Activated T-helper 1 cell treated with anti-CD3 and anti-CD28 coated beads, Interleukin-12 subunit alpha, Interleukin-12 subunit beta, Interleukin-2, Interleukin-4 antibody, amounts not matched to agents 30 ng/mL and 10 ng/mL and 1 ng/mL, durations not matched to agents 14 hours and 24 hours and 36 hours (primary cell): ENCODE measurements at regions of chr7 and their contacts with region 1.

Region 1: GRCh38 chr7:92682903-92683539 is 92.8 kb upstream of the FAM133B start:
- DNase-seq: no peak
- H3K4me3 Mint-ChIP-seq: peak overlapping the region; percentile 57
- H3K27ac Mint-ChIP-seq: peak overlapping the region; percentile 95
- H3K4me1 Mint-ChIP-seq: peaks cover 90% of the 10 kb centered on the region
- H3K27me3 Mint-ChIP-seq: no peaks in the 10 kb centered on the region

Region 2: DNA sequence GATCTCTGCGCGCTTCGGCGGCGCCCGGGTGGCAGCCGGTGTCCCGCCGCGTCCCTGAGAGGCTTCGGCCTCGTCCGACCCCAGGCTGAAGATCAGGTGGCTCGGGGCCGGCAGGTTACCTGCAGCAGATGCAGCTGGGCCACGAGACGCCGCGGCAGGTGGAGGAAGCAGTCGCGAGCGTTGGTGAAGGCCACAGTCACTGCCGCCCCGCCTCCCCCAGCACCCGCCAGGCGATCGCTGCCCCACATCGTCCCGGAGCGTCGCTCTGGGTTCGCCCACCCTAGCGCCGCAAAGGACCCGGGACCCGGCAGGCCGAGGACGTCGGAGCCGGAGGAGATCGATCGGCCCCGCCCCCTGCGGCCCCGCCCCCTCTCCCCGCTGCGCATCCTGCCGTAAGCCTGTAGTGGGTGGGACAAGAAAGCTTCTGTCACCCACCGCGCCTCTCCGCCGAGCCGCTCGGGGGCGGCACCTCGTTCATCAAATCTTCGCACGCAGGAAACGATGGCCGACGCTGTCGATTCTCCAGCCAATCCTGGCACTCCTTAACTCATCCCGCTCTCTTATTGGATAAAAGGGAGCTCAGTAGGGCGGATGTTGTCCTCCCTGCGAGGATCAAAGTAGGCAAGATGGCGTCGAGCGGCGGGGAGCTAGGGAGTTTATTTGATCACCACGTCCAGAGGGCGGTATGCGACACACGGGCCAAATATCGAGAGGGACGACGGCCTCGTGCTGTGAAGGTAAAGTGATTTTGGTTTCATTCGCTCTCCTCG is 154.6 kb before region 1 on chr7 and contains the starts of genes PEX1 and RBM48:
- intact Hi-C with region 1: loop called (anchors 5 kb)
- DNase-seq: peak; percentile 94
- H3K4me3 Mint-ChIP-seq: peak within 1 kb of the TSS; percentile 91
- H3K27ac Mint-ChIP-seq: peak within 1 kb of the TSS; percentile 94
- H3K4me1 Mint-ChIP-seq: peaks cover 24% of the 10 kb centered on the region
- H3K27me3 Mint-ChIP-seq: no peaks in the 10 kb centered on the region
- total RNA-seq, gene PEX1: 14.7 and 17.0 TPM in 2 replicates
- total RNA-seq, gene RBM48: 17.2 and 17.6 TPM in 2 replicates

Region 3: GRCh38 chr7:92595281-92595680 is 87.7 kb before region 1 on chr7:
- intact Hi-C with region 1: no loop called
- DNase-seq: no peak
- H3K4me3 Mint-ChIP-seq: no peak overlapping the region
- H3K27ac Mint-ChIP-seq: no peak overlapping the region
- H3K4me1 Mint-ChIP-seq: no peaks in the 10 kb centered on the region
- H3K27me3 Mint-ChIP-seq: peaks cover 5% of the 10 kb centered on the region

Region 4: DNA sequence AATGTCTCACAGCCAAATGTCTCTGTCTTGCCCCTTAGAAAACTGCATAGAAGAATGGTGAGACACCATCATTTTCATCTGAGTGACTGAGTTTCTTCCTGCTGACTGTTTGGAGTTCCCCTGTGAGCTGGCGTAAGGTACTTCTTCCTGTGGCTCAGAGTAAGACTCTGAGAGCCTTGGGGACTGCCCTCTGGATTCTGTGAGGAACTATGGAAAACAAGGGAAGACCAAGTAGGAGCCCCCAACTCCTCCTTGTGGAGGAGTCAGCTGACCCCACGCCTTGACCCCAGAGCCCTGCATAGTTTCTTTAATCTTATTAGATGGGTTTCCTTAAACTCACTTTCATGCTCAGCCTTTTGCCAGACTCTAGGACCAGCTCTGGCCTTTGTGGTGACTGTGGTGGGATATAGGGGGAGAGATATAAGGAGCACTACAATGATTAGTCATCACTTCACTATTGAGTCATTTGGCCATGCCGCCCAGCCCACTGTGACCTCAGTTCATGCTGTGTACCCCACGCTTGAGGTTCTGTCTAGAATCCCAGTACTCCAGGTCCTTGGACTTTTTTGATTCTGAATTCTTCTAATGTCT is 41.0 kb before region 1 on chr7:
- intact Hi-C with region 1: loop called (anchors 2 kb)
- DNase-seq: peak; percentile 64
- H3K4me3 Mint-ChIP-seq: peak overlapping the region; percentile 58
- H3K27ac Mint-ChIP-seq: peak overlapping the region; percentile 97
- H3K4me1 Mint-ChIP-seq: peaks cover 87% of the 10 kb centered on the region
- H3K27me3 Mint-ChIP-seq: no peaks in the 10 kb centered on the region

Region 5: DNA sequence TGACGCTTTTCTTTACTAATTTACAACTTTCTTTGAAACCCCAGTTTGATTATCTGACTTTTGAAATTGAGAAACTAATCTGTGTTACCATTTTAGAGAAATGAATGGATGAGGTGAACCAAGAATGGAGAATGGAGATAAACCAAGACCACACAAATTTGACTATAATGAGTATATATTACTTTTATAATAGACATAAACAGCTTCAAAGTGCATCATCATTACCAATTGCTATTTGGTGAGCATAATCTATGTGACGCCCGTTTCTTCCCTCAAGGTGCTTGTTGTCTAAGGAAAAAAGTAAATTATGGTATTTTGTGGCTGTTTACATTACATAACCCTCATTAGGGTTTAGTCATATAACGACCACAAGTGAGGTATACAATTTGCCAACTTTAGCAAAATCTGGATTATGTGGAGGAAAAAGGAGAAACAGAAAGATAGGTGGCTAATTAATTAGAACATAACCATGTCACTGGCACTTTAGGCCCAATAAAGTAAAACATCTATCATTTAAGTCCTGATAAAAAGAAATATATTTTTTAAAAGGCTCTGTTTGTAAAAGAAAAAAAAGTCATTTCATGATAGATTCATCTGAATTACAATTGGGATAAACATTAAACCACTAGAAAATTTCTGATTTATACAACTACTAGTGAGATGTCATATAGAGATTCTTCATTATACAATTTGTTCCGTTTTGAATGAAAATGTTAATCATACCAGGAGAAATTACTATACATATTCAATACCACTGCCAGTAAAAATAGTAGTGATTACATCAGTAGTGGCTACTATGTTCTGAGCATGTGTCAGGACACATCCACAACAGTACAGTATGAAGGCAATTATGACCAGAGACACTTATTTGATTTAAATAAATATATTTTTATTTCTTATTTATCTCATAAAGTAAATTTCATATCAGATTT is 25.4 kb after region 1 on chr7:
- intact Hi-C with region 1: loop called (anchors 1 kb)
- DNase-seq: no peak
- H3K4me3 Mint-ChIP-seq: no peak overlapping the region
- H3K27ac Mint-ChIP-seq: peak overlapping the region; percentile 84
- H3K4me1 Mint-ChIP-seq: peaks cover 59% of the 10 kb centered on the region
- H3K27me3 Mint-ChIP-seq: no peaks in the 10 kb centered on the region

Region 6: GRCh38 chr7:92740700-92741126 is 57.7 kb after region 1 on chr7:
- intact Hi-C with region 1: no loop called
- DNase-seq: no peak
- H3K4me3 Mint-ChIP-seq: peak overlapping the region; percentile 16
- H3K27ac Mint-ChIP-seq: peak overlapping the region; percentile 71
- H3K4me1 Mint-ChIP-seq: peaks cover 86% of the 10 kb centered on the region
- H3K27me3 Mint-ChIP-seq: no peaks in the 10 kb centered on the region

Region 7: GRCh38 chr7:92768501-92769393 is 85.7 kb after region 1 on chr7:
- intact Hi-C with region 1: loop called (anchors 2 kb)
- DNase-seq: peak; percentile 20
- H3K4me3 Mint-ChIP-seq: peak overlapping the region; percentile 47
- H3K27ac Mint-ChIP-seq: peak overlapping the region; percentile 85
- H3K4me1 Mint-ChIP-seq: peaks cover 83% of the 10 kb centered on the region
- H3K27me3 Mint-ChIP-seq: no peaks in the 10 kb centered on the region

Region 8: GRCh38 chr7:93055543-93056107 is 372.6 kb after region 1 on chr7:
- intact Hi-C with region 1: loop called (anchors 5 kb)
- DNase-seq: no peak
- H3K4me3 Mint-ChIP-seq: no peak overlapping the region
- H3K27ac Mint-ChIP-seq: no peak overlapping the region
- H3K4me1 Mint-ChIP-seq: peaks cover 19% of the 10 kb centered on the region
- H3K27me3 Mint-ChIP-seq: peaks cover 6% of the 10 kb centered on the region

Region 9: DNA sequence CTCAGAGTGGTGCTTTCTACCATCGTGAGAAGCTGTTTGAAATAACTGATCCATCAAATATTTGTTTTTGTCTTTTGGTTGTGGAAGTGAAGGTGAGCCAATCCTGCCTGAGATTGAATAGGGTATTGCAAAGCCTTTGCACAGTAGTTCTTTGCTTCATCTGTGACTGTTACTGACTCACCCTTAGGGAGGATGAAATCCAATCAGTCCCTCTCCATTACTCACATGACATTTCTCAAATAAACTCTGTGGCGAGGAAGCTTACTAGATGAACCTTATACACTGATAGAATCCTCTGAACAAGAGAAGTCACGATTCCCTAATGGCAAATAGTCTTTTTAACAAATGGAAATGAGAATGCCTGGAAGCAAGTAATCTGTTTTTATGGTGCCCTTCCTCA is 511.4 kb after region 1 on chr7:
- intact Hi-C with region 1: no loop called
- DNase-seq: no peak
- H3K4me3 Mint-ChIP-seq: no peak overlapping the region
- H3K27ac Mint-ChIP-seq: no peak overlapping the region
- H3K4me1 Mint-ChIP-seq: no peaks in the 10 kb centered on the region
- H3K27me3 Mint-ChIP-seq: peaks cover 33% of the 10 kb centered on the region